Gastrocnemius medialis (tissue), 4 donors: ENCODE measurements at regions of chr3 and their contacts with region 1.

Region 1: DNA sequence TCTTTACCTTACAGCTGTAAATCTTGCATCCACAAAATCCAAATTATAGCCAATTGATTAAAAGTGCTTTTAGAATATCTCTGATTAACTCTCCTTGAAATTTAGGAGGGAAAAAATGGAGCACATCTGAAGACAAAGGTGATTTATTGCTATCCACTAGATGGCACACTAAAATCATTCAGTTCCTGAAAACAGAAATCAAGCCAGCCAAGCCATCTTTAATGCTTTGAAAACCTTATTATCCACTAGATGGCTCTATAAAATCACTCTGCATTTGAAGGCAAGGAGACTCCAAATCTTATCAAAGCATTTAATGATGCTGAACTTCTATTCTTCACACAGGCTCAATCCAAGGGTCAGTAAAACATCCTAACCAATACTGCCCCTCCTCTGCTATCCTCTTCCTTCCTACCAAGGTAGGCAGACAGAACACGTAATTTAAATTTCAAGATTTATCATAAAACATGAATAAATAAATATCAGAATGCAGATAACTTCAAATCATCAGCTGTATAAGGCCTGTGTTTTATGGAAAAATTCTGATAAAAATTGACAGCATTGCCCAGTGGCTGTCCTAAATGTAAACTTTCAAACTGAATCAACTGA is 48.4 kb downstream of the GOLIM4 start:
- DNase-seq: no peak
- ATAC-seq: peak; percentile 83 to 84
- H3K4me3 ChIP-seq: no peak overlapping the region
- H3K27ac ChIP-seq: no peak overlapping the region
- H3K4me1 ChIP-seq: peaks cover 29 to 48% of the 10 kb centered on the region in 2 donors
- H3K27me3 ChIP-seq: no peaks in the 10 kb centered on the region
- CTCF ChIP-seq: peak; percentile 66 to 97 (median 84)
- POLR2A ChIP-seq: no peak

Region 2: DNA sequence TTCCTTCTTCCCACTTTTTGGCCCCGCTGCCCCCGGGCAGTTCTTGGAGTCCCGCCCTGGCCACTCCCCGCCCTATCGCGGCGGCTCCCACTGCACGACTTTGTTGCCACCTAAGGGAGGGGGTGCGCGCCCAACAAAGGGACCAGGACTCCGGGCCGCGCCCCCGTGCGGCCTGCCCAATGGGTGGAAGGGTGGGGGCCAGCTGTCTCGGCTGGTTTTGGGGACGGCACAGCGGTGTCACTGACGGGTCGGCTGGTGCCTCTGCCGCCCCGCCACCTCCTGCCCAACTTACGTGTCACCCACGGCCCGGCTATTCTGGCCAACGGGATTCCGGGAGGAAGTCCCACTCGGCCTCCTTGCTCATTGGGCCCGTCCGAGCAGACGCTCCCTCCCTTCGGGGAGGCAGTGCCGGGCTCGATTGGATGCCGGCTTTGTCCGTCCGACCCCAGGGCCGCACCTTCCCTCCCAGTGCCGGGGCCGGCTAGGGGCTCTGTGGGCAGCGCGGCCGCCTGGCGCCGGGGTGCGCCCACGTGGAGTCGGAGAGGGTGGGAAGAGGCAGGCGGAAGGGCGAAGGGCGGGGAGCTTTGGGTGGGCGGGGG is 48.4 kb after region 1 on chr3 and contains the start of gene GOLIM4:
- in situ Hi-C with region 1: loop called in 3 of 4 experiments (anchors 5 to 10 kb)
- intact Hi-C with region 1: loop called (anchors 1 kb)
- DNase-seq: peak; percentile 95 to 96
- ATAC-seq: peak; percentile 87 to 91
- H3K4me3 ChIP-seq: peak within 1 kb of the TSS; percentile 73 to 92 (median 88)
- H3K27ac ChIP-seq: peak within 1 kb of the TSS; percentile 92 to 97 (median 94)
- H3K4me1 ChIP-seq: peaks cover 42 to 44% of the 10 kb centered on the region in 2 donors
- H3K27me3 ChIP-seq: no peaks in the 10 kb centered on the region
- CTCF ChIP-seq: peak in 1 of 5 experiments; percentile 21
- POLR2A ChIP-seq: peak; percentile 85 to 91
- total RNA-seq, gene GOLIM4: 13.0 to 20.8 (median 17.8) TPM

Region 3: GRCh38 chr3:168100777-168101492 is 53.6 kb after region 1 on chr3:
- in situ Hi-C with region 1: loop called in 2 of 4 experiments (anchors 10 kb)
- intact Hi-C with region 1: loop called (anchors 1 kb)
- DNase-seq: no peak
- ATAC-seq: no peak
- H3K4me3 ChIP-seq: no peak overlapping the region
- H3K27ac ChIP-seq: no peak overlapping the region
- H3K4me1 ChIP-seq: peaks cover 6 to 7% of the 10 kb centered on the region in 2 donors
- H3K27me3 ChIP-seq: no peaks in the 10 kb centered on the region
- CTCF ChIP-seq: no peak
- POLR2A ChIP-seq: no peak